CD4-positive, alpha-beta T cell (primary cell): ENCODE measurements at regions of chr6 and their contacts with region 1.

Region 1: DNA sequence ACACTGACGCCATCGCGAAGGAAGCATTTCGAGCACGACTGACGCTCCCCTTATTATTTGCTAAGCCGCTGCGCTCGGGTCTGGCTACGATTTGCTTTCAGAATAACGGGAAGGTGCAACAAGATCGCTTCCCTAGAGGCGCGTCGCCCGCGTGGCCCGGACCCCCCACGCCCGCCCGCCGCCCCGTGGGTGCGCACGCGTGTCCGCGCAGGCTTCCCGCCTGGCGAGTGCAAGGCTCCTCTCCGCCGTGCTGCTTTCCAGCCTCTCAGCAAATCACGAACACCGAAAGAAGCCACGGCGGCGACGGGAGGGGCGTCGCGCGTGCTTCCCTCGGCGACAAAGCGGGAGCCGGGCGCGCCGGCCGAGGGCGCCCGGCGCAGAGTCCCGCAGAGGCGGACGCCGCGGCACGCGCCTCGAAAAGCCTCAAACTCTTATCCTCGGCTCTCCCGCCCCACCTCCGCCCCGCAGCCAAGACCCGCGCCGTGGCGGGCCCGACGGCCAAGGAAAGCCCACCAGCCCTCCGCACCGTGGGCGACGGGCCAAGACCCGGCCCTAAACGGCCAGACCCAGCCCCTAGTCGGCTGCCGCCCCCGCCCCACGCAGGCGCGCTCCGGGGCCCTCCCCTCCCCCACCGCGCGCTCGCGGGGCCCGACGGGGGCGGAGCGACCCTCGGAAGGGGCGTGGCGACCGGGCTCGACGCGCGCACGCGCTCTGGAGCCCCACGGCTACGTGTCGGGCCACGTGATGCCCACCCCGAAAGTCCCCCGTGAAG is 987 bp upstream of the QKI start:
- DNase-seq: peak; percentile 81 to 97 (median 90)
- ATAC-seq: peak; percentile 68
- H3K4me3 ChIP-seq: peak overlapping the region; percentile 83
- H3K4me3 Mint-ChIP-seq: peak overlapping the region; percentile 93
- H3K27ac ChIP-seq: peak overlapping the region; percentile 81 to 93
- H3K27ac Mint-ChIP-seq: peak overlapping the region; percentile 87
- H3K4me1 ChIP-seq: peaks cover 3% of the 10 kb centered on the region
- H3K4me1 Mint-ChIP-seq: peaks cover 38% of the 10 kb centered on the region
- H3K27me3 ChIP-seq: no peaks in the 10 kb centered on the region
- H3K27me3 Mint-ChIP-seq: no peaks in the 10 kb centered on the region
- CTCF ChIP-seq: no peak

Region 2: GRCh38 chr6:162727309-162728182 is 686.0 kb before region 1 on chr6 and contains the starts of genes PACRG and PRKN:
- CTCF ChIA-PET with region 1: no interaction called
- POLR2A ChIA-PET with region 1: interaction called, 5 read pairs
- intact Hi-C with region 1: loop called (anchors 5 to 10 kb)
- DNase-seq: peak; percentile 96 to 99 (median 98)
- ATAC-seq: peak; percentile 95
- H3K4me3 ChIP-seq: peak within 1 kb of the TSS; percentile 60
- H3K4me3 Mint-ChIP-seq: peak within 1 kb of the TSS; percentile 94
- H3K27ac ChIP-seq: peak within 1 kb of the TSS; percentile 61 to 82
- H3K27ac Mint-ChIP-seq: peak within 1 kb of the TSS; percentile 86
- H3K4me1 ChIP-seq: peaks cover 14% of the 10 kb centered on the region
- H3K4me1 Mint-ChIP-seq: peaks cover 18% of the 10 kb centered on the region
- H3K27me3 ChIP-seq: no peaks in the 10 kb centered on the region
- H3K27me3 Mint-ChIP-seq: no peaks in the 10 kb centered on the region
- CTCF ChIP-seq: no peak
- total RNA-seq, gene PACRG: 0.66 to 0.81 TPM
- total RNA-seq, gene PRKN: 5.2 to 5.4 TPM

Region 3: GRCh38 chr6:163355426-163355991 is 58.0 kb before region 1 on chr6:
- CTCF ChIA-PET with region 1: no interaction called
- POLR2A ChIA-PET with region 1: no interaction called
- intact Hi-C with region 1: no loop called
- DNase-seq: peak in 3 of 14 experiments; percentile 5 to 62 (median 55)
- ATAC-seq: no peak
- H3K4me3 ChIP-seq: no peak overlapping the region
- H3K4me3 Mint-ChIP-seq: no peak overlapping the region
- H3K27ac ChIP-seq: no peak overlapping the region
- H3K27ac Mint-ChIP-seq: no peak overlapping the region
- H3K4me1 ChIP-seq: no peaks in the 10 kb centered on the region
- H3K4me1 Mint-ChIP-seq: no peaks in the 10 kb centered on the region
- H3K27me3 ChIP-seq: no peaks in the 10 kb centered on the region
- H3K27me3 Mint-ChIP-seq: peaks cover 22% of the 10 kb centered on the region
- CTCF ChIP-seq: no peak

Region 4: DNA sequence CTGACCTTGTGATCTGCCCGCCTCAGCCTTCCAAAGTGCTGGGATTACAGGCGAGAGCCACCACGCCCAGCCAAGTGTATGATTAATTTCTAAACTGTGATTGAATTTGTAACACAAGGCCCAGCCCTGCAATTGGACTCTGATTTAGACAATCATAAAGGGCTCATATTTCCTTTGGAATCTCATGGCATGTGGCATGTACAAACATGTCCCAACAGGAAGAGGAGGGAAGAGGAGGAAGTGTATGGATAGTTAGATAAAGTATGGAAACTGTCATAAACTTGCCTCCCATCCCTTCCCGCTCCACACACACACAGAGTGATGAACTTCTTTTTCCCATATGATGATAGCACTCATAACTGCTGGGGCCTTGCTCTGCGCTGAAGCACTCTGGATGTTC is 26.2 kb before region 1 on chr6:
- CTCF ChIA-PET with region 1: no interaction called
- POLR2A ChIA-PET with region 1: no interaction called
- intact Hi-C with region 1: no loop called
- DNase-seq: no peak
- ATAC-seq: no peak
- H3K4me3 ChIP-seq: no peak overlapping the region
- H3K4me3 Mint-ChIP-seq: no peak overlapping the region
- H3K27ac ChIP-seq: no peak overlapping the region
- H3K27ac Mint-ChIP-seq: no peak overlapping the region
- H3K4me1 ChIP-seq: no peaks in the 10 kb centered on the region
- H3K4me1 Mint-ChIP-seq: no peaks in the 10 kb centered on the region
- H3K27me3 ChIP-seq: no peaks in the 10 kb centered on the region
- H3K27me3 Mint-ChIP-seq: peaks cover 15% of the 10 kb centered on the region
- CTCF ChIP-seq: no peak

Region 5: GRCh38 chr6:163427498-163428254 is 14.1 kb after region 1 on chr6:
- CTCF ChIA-PET with region 1: no interaction called
- POLR2A ChIA-PET with region 1: interaction called, 12 read pairs
- intact Hi-C with region 1: no loop called
- DNase-seq: peak in 3 of 14 experiments; percentile 52 to 61 (median 61)
- ATAC-seq: no peak
- H3K4me3 ChIP-seq: no peak overlapping the region
- H3K4me3 Mint-ChIP-seq: no peak overlapping the region
- H3K27ac ChIP-seq: no peak overlapping the region
- H3K27ac Mint-ChIP-seq: no peak overlapping the region
- H3K4me1 ChIP-seq: no peaks in the 10 kb centered on the region
- H3K4me1 Mint-ChIP-seq: peaks cover 63% of the 10 kb centered on the region
- H3K27me3 ChIP-seq: no peaks in the 10 kb centered on the region
- H3K27me3 Mint-ChIP-seq: no peaks in the 10 kb centered on the region
- CTCF ChIP-seq: peak; percentile 29

Region 6: GRCh38 chr6:163460307-163460782 is 46.8 kb after region 1 on chr6:
- CTCF ChIA-PET with region 1: no interaction called
- POLR2A ChIA-PET with region 1: interaction called, 29 read pairs
- intact Hi-C with region 1: loop called in 1 of 2 experiments (anchors 2 kb)
- DNase-seq: peak in 5 of 14 experiments; percentile 1 to 79 (median 65)
- ATAC-seq: peak; percentile 84
- H3K4me3 ChIP-seq: peak overlapping the region; percentile 54
- H3K4me3 Mint-ChIP-seq: peak overlapping the region; percentile 94
- H3K27ac ChIP-seq: peak overlapping the region; percentile 51 to 75
- H3K27ac Mint-ChIP-seq: peak overlapping the region; percentile 94
- H3K4me1 ChIP-seq: peaks cover 19% of the 10 kb centered on the region
- H3K4me1 Mint-ChIP-seq: peaks cover 80% of the 10 kb centered on the region
- H3K27me3 ChIP-seq: no peaks in the 10 kb centered on the region
- H3K27me3 Mint-ChIP-seq: no peaks in the 10 kb centered on the region
- CTCF ChIP-seq: no peak

Region 7: GRCh38 chr6:163554663-163555062 is 141.1 kb after region 1 on chr6:
- CTCF ChIA-PET with region 1: interaction called, 4 read pairs
- POLR2A ChIA-PET with region 1: interaction called, 5 read pairs
- intact Hi-C with region 1: loop called (anchors 2 to 5 kb)
- DNase-seq: peak; percentile 26 to 70 (median 52)
- ATAC-seq: peak; percentile 54
- H3K4me3 ChIP-seq: no peak overlapping the region
- H3K4me3 Mint-ChIP-seq: no peak overlapping the region
- H3K27ac ChIP-seq: no peak overlapping the region
- H3K27ac Mint-ChIP-seq: no peak overlapping the region
- H3K4me1 ChIP-seq: no peaks in the 10 kb centered on the region
- H3K4me1 Mint-ChIP-seq: peaks cover 3% of the 10 kb centered on the region
- H3K27me3 ChIP-seq: no peaks in the 10 kb centered on the region
- H3K27me3 Mint-ChIP-seq: no peaks in the 10 kb centered on the region
- CTCF ChIP-seq: peak; percentile 40

Region 8: GRCh38 chr6:163956571-163957407 is 543.3 kb after region 1 on chr6:
- CTCF ChIA-PET with region 1: no interaction called
- POLR2A ChIA-PET with region 1: no interaction called
- intact Hi-C with region 1: loop called in 1 of 2 experiments (anchors 2 kb)
- DNase-seq: peak; percentile 15 to 72 (median 40)
- ATAC-seq: peak; percentile 48
- H3K4me3 ChIP-seq: no peak overlapping the region
- H3K4me3 Mint-ChIP-seq: no peak overlapping the region
- H3K27ac ChIP-seq: no peak overlapping the region
- H3K27ac Mint-ChIP-seq: no peak overlapping the region
- H3K4me1 ChIP-seq: no peaks in the 10 kb centered on the region
- H3K4me1 Mint-ChIP-seq: no peaks in the 10 kb centered on the region
- H3K27me3 ChIP-seq: peaks cover under 1 to 8% of the 10 kb centered on the region in 2 experiments
- H3K27me3 Mint-ChIP-seq: peaks cover 49% of the 10 kb centered on the region
- CTCF ChIP-seq: peak; percentile 68

Region 9: DNA sequence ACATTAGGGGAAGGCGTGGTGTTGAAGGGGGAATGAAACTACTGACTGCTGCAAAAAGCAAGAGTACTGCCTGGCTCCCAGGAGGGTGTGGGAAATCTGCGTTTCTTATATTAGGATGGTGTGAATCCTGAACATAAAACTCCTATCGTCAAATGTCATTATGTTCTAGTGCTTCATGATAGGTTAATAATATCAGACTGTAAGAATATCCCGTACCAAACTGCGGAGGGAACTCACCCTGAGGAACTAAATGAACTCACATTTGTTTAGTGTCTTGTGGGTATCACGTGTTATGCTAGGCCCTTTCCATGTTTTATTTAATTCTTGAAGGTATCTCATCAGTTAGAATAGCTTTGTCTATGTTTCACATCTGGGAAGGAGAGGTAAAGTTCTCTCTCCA is 611.6 kb after region 1 on chr6:
- CTCF ChIA-PET with region 1: no interaction called
- POLR2A ChIA-PET with region 1: no interaction called
- intact Hi-C with region 1: no loop called
- DNase-seq: no peak
- ATAC-seq: no peak
- H3K4me3 ChIP-seq: no peak overlapping the region
- H3K4me3 Mint-ChIP-seq: no peak overlapping the region
- H3K27ac ChIP-seq: no peak overlapping the region
- H3K27ac Mint-ChIP-seq: no peak overlapping the region
- H3K4me1 ChIP-seq: no peaks in the 10 kb centered on the region
- H3K4me1 Mint-ChIP-seq: no peaks in the 10 kb centered on the region
- H3K27me3 ChIP-seq: no peaks in the 10 kb centered on the region
- H3K27me3 Mint-ChIP-seq: peaks cover 6% of the 10 kb centered on the region
- CTCF ChIP-seq: no peak